Breast epithelium (tissue), 4 donors: ENCODE measurements at regions of chr19 and their contacts with region 1.

Region 1: DNA sequence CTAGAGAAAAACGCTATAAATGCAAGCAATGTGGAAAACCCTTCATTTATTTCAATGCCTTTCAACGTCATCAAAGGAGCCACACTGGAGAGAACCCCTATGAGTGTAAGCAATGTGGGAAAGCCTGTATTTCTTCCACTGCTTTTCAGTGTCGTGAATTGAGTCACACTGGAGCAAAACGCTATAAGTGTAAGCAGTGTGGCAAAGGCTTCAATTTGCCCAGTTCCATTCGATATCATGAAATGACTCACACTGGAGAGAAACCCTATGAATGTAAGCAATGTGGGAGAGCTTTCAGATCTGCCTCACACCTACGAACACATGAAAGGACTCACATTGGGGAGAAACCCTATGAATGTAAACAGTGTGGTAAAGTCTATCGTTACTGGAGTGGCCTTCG is 27.4 kb downstream of the ZNF20 start:
- DNase-seq: no peak
- H3K4me3 ChIP-seq: no peak overlapping the region
- H3K27ac ChIP-seq: no peak overlapping the region
- H3K4me1 ChIP-seq: no peaks in the 10 kb centered on the region
- H3K27me3 ChIP-seq: no peaks in the 10 kb centered on the region
- CTCF ChIP-seq: no peak
- POLR2A ChIP-seq: no peak

Region 2: DNA sequence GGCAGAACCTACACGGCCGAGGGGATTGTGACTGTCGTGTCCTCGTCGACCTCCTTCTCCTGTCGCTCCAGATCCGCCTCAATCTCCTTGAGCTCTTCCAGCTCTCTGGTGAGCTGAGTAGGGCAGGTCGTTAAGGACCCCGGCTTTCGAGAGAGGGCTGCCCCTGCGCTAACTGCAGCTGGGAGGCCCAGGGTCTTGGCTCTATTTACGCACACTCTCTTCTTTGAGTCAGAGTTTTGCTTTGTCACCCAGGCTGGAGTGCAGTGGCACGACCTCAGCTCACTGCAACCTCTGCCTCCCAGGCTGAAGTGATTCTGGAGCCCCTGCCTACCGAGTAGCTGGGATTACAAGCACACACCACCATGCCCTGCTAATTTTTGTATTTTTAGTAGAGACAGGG is 964.7 kb before region 1 on chr19:
- intact Hi-C with region 1: loop called (anchors 5 kb)
- DNase-seq: no peak
- H3K4me3 ChIP-seq: no peak overlapping the region
- H3K27ac ChIP-seq: no peak overlapping the region
- H3K4me1 ChIP-seq: peaks cover 4 to 11% of the 10 kb centered on the region in 2 donors
- H3K27me3 ChIP-seq: no peaks in the 10 kb centered on the region
- CTCF ChIP-seq: no peak
- POLR2A ChIP-seq: no peak

Region 3: GRCh38 chr19:12047868-12048267 is 64.8 kb before region 1 on chr19:
- intact Hi-C with region 1: no loop called
- DNase-seq: no peak
- H3K4me3 ChIP-seq: no peak overlapping the region
- H3K27ac ChIP-seq: no peak overlapping the region
- H3K4me1 ChIP-seq: no peaks in the 10 kb centered on the region
- H3K27me3 ChIP-seq: no peaks in the 10 kb centered on the region
- CTCF ChIP-seq: no peak
- POLR2A ChIP-seq: no peak